Naive thymus-derived CD4-positive, alpha-beta T cell (primary cell): ENCODE measurements at regions of chr22 and their contacts with region 1.

Region 1: DNA sequence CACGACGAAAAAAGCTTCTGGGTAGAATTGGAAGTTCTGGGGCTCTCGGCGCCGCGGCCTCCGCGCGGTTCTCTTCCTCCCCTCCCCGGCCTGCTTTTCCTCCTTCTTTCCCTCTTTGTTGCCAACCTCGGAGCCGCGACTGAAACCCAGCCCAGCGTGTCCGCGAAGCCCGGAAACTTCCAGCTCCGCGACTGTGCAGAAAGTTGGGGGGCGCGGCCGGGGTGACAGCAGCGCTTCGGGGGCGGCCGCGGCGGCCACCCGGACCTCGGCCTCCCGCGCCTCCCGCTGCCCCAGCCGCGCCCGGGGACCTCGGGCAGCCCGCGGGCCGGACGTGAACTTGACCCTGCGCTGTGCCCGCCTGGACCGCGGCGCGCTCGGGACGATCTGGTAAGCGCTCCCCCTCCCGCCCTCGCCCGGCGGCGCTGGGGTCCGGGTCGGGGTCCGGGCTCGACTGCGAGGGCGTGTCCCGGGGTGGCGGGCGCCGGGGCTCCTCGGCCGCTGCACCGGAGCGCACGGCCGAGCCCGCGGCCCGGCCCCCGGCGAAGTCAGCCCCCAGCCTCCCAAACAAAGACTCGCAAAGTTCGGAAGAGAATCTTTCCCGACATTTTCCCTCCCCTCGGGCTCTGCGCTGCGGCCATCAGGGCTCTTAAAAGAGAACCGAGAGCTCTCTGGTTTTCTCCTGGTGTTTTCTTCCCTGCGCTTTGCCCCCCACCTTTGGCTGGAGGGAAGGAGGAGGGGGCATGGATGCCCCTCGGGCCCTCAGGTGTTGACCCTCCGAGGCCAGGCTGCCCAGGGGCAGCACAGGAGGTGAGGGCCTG is 67.9 kb upstream of the WNT7B start:
- DNase-seq: peak; percentile 24 to 54 (median 48)
- ATAC-seq: peak; percentile 44
- H3K4me3 ChIP-seq: peak overlapping the region; percentile 67
- H3K4me3 Mint-ChIP-seq: peak overlapping the region; percentile 86 to 92 (median 90)
- H3K27ac ChIP-seq: peak overlapping the region; percentile 76
- H3K27ac Mint-ChIP-seq: peak overlapping the region; percentile 86 to 96 (median 94)
- H3K4me1 ChIP-seq: peaks cover 10 to 17% of the 10 kb centered on the region in 2 donors
- H3K4me1 Mint-ChIP-seq: peaks cover 14 to 64% (median 39%) of the 10 kb centered on the region in 7 donors
- H3K27me3 ChIP-seq: no peaks in the 10 kb centered on the region
- H3K27me3 Mint-ChIP-seq: peaks cover 0 to 6% (median 0%) of the 10 kb centered on the region in 5 donors

Region 2: DNA sequence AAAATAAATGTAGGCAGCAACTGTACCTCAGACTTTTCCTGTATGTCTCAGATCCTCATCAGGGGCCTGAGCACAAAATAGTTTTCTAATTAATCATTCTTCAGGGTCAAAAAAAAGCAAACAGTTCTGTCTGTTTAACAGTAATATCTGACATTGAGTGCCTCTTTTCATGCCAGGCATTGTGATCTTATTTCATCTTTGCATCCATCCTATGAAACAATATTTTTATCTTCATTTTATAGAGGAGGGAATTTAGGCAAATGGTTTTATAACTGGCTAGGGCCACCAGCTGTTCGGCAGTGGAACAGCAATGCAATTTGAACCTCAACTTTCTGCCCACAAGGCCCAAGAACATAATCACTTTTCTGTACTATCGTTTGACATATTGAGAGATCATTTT is 213.4 kb before region 1 on chr22:
- CTCF ChIA-PET with region 1: no interaction called
- POLR2A ChIA-PET with region 1: no interaction called
- intact Hi-C with region 1: no loop called
- DNase-seq: no peak
- ATAC-seq: no peak
- H3K4me3 ChIP-seq: no peak overlapping the region
- H3K4me3 Mint-ChIP-seq: no peak overlapping the region
- H3K27ac ChIP-seq: no peak overlapping the region
- H3K27ac Mint-ChIP-seq: no peak overlapping the region
- H3K4me1 ChIP-seq: no peaks in the 10 kb centered on the region
- H3K4me1 Mint-ChIP-seq: peaks cover 0 to 4% (median 0%) of the 10 kb centered on the region in 7 donors
- H3K27me3 ChIP-seq: no peaks in the 10 kb centered on the region
- H3K27me3 Mint-ChIP-seq: no peaks in the 10 kb centered on the region

Region 3: DNA sequence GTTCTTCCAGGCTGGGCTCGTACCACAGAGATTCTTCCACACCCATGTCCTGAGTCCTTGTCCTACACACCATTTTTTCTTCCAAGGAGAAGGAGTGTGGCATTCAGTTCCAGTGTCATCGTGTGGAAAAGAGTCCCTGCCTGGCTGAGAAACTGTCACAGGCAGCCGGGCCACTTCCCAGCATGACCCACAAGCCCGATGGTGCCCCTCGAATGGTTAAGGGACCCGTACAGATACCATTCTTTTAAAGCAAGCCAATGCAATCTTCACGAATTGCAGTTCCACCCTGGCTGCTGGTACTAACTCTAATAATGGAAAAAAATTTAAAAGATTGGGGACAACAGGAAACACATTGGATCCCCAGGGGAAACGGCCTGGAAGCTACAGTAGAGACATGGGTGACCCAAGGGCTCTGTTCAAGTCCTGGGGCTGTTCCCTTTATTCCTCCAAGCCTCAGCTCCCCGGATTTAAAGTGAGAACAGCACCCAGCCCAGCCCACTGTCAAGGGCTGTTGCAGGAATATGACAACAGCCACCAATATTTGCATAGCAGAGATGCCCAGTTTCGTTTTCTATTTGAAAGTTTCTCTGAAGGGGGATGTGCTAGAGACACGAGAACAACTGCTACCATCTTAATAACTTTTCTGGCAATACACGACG is 13.1 kb after region 1 on chr22:
- CTCF ChIA-PET with region 1: interaction called, 9 read pairs
- POLR2A ChIA-PET with region 1: interaction called, 81 read pairs
- intact Hi-C with region 1: loop called in 1 of 2 experiments (anchors 1 kb)
- DNase-seq: peak in 5 of 9 donors; percentile 39 to 55 (median 53)
- ATAC-seq: peak; percentile 74
- H3K4me3 ChIP-seq: no peak overlapping the region
- H3K4me3 Mint-ChIP-seq: peak overlapping the region; percentile 17 to 71 (median 66)
- H3K27ac ChIP-seq: peak overlapping the region; percentile 72
- H3K27ac Mint-ChIP-seq: peak overlapping the region; percentile 84 to 95 (median 87)
- H3K4me1 ChIP-seq: peaks cover 19 to 35% of the 10 kb centered on the region in 2 donors
- H3K4me1 Mint-ChIP-seq: peaks cover 29 to 64% (median 58%) of the 10 kb centered on the region in 7 donors
- H3K27me3 ChIP-seq: no peaks in the 10 kb centered on the region
- H3K27me3 Mint-ChIP-seq: peaks cover 0 to 5% (median 0%) of the 10 kb centered on the region in 5 donors

Region 4: GRCh38 chr22:46219636-46220035 is 174.8 kb after region 1 on chr22:
- CTCF ChIA-PET with region 1: no interaction called
- POLR2A ChIA-PET with region 1: no interaction called
- intact Hi-C with region 1: no loop called
- DNase-seq: peak in 2 of 9 donors; percentile 2 to 7
- ATAC-seq: no peak
- H3K4me3 ChIP-seq: no peak overlapping the region
- H3K4me3 Mint-ChIP-seq: peak overlapping the region in 1 of 10 donors; percentile 12
- H3K27ac ChIP-seq: no peak overlapping the region
- H3K27ac Mint-ChIP-seq: peak overlapping the region in 3 of 9 donors; percentile 5 to 65 (median 60)
- H3K4me1 ChIP-seq: no peaks in the 10 kb centered on the region
- H3K4me1 Mint-ChIP-seq: peaks cover 0 to 14% (median 5%) of the 10 kb centered on the region in 7 donors
- H3K27me3 ChIP-seq: no peaks in the 10 kb centered on the region
- H3K27me3 Mint-ChIP-seq: no peaks in the 10 kb centered on the region

Region 5: DNA sequence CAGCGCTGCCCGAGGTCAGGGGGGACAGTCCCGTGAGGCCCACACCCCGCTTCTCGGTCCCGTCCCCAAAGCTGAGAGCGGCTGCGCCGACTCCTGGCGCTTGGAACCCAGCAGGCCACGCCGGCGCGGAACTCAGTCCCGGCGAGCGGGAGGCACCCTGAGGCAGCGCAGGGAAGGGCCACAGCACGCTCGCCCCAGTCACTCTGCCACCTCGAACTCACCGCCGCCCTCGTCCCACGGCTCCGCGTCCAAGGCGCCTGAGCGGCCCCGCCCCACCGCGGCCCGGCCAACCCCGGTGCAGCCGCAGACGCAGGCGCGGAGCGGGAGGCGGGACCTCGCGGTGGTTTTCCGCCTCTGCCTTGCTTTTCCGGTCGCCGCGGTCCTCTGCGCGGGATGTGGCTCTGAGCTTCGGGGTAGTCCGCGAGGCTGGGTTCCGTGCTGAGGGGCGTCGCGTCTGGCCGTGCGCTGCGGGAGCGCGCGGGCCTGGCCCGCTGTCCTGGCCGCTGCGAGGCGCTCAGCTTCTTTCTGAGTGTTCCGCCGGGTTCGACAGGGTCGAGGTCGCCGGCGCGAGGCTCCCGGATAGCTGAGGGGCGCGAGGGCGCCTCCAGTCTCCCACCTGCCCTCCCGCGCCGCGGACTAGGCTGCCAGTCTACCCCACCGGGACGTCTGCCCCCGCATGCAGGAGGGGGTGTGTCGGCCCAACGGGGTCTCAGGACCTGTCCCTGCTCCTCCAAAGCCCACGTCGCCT is 205.4 kb after region 1 on chr22 and contains the start of gene CDPF1:
- CTCF ChIA-PET with region 1: no interaction called
- POLR2A ChIA-PET with region 1: no interaction called
- intact Hi-C with region 1: no loop called
- DNase-seq: peak; percentile 82 to 96 (median 86)
- ATAC-seq: peak; percentile 97
- H3K4me3 ChIP-seq: peak within 1 kb of the TSS; percentile 71
- H3K4me3 Mint-ChIP-seq: peak within 1 kb of the TSS; percentile 74 to 93 (median 83)
- H3K27ac ChIP-seq: peak within 1 kb of the TSS; percentile 77
- H3K27ac Mint-ChIP-seq: peak within 1 kb of the TSS; percentile 51 to 92 (median 77)
- H3K4me1 ChIP-seq: peaks cover 5 to 7% of the 10 kb centered on the region in 2 donors
- H3K4me1 Mint-ChIP-seq: peaks cover 17 to 32% (median 29%) of the 10 kb centered on the region in 7 donors
- H3K27me3 ChIP-seq: no peaks in the 10 kb centered on the region
- H3K27me3 Mint-ChIP-seq: no peaks in the 10 kb centered on the region
- total RNA-seq, gene CDPF1: 4.2 to 13.8 (median 11.7) TPM